CD4-positive, alpha-beta memory T cell (primary cell): ENCODE measurements at regions of chr6 and their contacts with region 1.

Region 1: DNA sequence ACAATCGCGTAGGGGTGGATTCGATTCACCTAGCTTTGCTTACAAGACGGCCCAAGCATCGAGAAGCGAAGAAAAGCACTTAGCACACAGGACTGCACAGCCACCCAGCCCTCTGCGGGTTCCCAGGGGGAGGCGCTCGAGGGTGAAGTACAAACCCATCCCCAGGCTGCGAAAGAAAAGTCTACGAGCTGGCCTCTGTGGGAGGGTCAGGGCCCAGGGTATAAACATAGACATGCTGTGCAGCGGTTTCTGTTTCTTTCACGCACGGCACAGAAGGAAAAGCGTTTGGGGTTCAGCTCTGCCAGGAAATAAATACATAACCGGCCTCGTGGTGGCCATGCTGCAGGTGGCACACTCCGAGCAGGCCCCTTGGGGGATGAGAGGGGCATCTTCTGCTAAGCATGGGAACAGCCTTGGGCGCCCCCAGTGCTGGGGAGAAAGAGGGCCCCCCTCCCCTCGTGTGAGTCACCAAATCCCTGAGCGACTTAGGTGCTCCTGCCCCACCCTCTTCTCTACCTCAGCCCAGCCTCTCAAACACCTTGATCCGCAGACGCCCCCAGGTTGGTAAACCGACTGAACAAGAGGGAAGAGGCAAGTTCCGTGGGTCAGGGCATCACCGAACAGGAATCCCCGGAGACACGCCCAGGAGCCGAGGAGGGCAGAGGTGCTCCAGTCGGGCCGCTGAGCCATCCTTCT is 91.6 kb upstream of the RIPOR2 start:
- DNase-seq: peak; percentile 81 to 88 (median 86)
- H3K4me3 ChIP-seq: peak overlapping the region; percentile 43 to 54
- H3K4me3 Mint-ChIP-seq: peak overlapping the region; percentile 73 to 94 (median 82)
- H3K27ac ChIP-seq: peak overlapping the region; percentile 75
- H3K27ac Mint-ChIP-seq: peak overlapping the region; percentile 89 to 98 (median 93)
- H3K4me1 ChIP-seq: peaks cover 66% of the 10 kb centered on the region
- H3K4me1 Mint-ChIP-seq: peaks cover 53 to 71% (median 63%) of the 10 kb centered on the region in 4 donors
- H3K27me3 ChIP-seq: no peaks in the 10 kb centered on the region
- H3K27me3 Mint-ChIP-seq: no peaks in the 10 kb centered on the region

Region 2: GRCh38 chr6:24566020-24566767 is 461.2 kb before region 1 on chr6:
- CTCF ChIA-PET with region 1: no interaction called
- POLR2A ChIA-PET with region 1: no interaction called
- intact Hi-C with region 1: no loop called
- DNase-seq: no peak
- H3K4me3 ChIP-seq: no peak overlapping the region
- H3K4me3 Mint-ChIP-seq: no peak overlapping the region
- H3K27ac ChIP-seq: no peak overlapping the region
- H3K27ac Mint-ChIP-seq: no peak overlapping the region
- H3K4me1 ChIP-seq: no peaks in the 10 kb centered on the region
- H3K4me1 Mint-ChIP-seq: no peaks in the 10 kb centered on the region
- H3K27me3 ChIP-seq: no peaks in the 10 kb centered on the region
- H3K27me3 Mint-ChIP-seq: no peaks in the 10 kb centered on the region

Region 3: GRCh38 chr6:24720604-24721460 is 306.5 kb before region 1 on chr6:
- CTCF ChIA-PET with region 1: interaction called, 6 read pairs
- POLR2A ChIA-PET with region 1: interaction called, 12 read pairs
- intact Hi-C with region 1: no loop called
- DNase-seq: peak; percentile 100
- H3K4me3 ChIP-seq: peak overlapping the region; percentile 68 to 95
- H3K4me3 Mint-ChIP-seq: peak overlapping the region; percentile 91 to 100 (median 97)
- H3K27ac ChIP-seq: peak overlapping the region; percentile 100
- H3K27ac Mint-ChIP-seq: peak overlapping the region; percentile 90 to 100 (median 99)
- H3K4me1 ChIP-seq: peaks cover 38% of the 10 kb centered on the region
- H3K4me1 Mint-ChIP-seq: peaks cover 33 to 56% (median 40%) of the 10 kb centered on the region in 4 donors
- H3K27me3 ChIP-seq: no peaks in the 10 kb centered on the region
- H3K27me3 Mint-ChIP-seq: no peaks in the 10 kb centered on the region

Region 4: DNA sequence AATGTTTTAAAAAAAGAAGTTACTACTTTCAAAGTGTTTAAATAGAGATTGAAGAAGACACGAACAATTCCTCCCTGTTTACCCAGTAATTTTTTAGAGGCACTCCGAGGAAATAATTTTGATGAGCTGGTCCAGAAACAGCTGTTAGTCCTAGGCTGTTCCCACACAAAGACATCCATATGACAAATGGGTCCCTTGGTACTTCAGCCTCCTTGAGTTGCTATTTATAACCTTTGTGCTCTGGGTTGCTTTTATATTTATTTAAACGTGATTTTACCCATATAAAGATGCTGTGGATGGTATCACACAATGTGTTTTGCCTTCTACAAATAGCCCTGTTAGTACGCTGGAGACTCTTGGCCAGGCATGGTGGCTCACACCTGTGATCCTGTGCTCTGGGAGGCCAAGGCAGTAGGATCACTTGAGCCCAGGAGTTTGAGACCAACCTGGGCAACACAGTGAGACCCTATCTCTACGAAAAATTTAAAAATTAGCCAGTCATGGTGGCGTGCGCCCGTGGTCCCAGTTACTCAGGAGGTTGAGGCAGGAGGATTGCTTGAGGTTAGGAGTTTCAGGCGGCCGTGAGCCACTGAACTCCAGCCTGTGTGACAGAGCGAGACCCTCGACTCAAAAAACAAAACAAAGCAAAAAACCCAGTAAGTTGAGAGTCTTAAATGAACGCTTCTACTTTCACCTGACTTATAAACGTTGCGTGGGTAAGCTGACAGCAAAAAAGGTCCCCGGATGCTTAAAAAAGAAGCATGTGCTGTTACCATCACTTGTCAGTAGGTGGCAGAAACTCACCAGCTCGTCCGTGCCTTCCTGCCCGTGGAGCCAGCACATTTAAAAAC is 171.7 kb before region 1 on chr6:
- CTCF ChIA-PET with region 1: interaction called, 68 read pairs
- POLR2A ChIA-PET with region 1: interaction called, 33 read pairs
- intact Hi-C with region 1: no loop called
- DNase-seq: peak; percentile 76 to 82 (median 77)
- H3K4me3 ChIP-seq: no peak overlapping the region
- H3K4me3 Mint-ChIP-seq: peak overlapping the region in 5 of 8 donors; percentile 1 to 87 (median 26)
- H3K27ac ChIP-seq: peak overlapping the region; percentile 61
- H3K27ac Mint-ChIP-seq: peak overlapping the region; percentile 82 to 92 (median 90)
- H3K4me1 ChIP-seq: peaks cover 53% of the 10 kb centered on the region
- H3K4me1 Mint-ChIP-seq: peaks cover 48 to 58% (median 50%) of the 10 kb centered on the region in 4 donors
- H3K27me3 ChIP-seq: no peaks in the 10 kb centered on the region
- H3K27me3 Mint-ChIP-seq: no peaks in the 10 kb centered on the region

Region 5: DNA sequence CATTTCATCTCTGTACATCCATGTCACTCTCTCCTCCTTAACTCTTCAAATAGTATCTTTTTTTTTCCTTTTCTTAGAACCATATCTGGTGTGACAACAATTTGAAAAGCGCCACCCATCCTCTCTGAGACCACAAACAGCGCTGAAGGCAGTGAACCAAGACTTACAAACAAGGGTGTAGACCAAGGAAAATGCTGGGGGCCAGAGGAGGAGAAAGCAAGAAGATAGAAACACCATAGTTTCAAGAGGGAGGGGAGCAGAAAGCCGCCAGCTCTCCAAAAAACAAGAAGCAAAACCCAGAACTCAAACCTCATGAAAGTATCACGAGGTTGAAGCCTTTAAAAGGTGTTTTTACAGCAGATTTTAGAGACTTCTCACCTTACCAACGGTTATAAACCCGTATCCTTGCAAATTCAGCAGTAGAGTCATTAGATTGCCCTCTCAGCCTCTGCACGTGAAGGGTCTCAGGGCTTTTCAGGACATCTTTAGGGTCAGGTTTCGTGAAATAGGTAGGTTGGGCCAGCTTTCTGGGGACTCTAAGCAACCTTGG is 78.3 kb before region 1 on chr6:
- CTCF ChIA-PET with region 1: interaction called, 3 read pairs
- POLR2A ChIA-PET with region 1: interaction called, 17 read pairs
- intact Hi-C with region 1: no loop called
- DNase-seq: peak; percentile 70 to 86 (median 83)
- H3K4me3 ChIP-seq: peak overlapping the region; percentile 19 to 47
- H3K4me3 Mint-ChIP-seq: peak overlapping the region; percentile 57 to 90 (median 82)
- H3K27ac ChIP-seq: peak overlapping the region; percentile 51
- H3K27ac Mint-ChIP-seq: peak overlapping the region; percentile 84 to 97 (median 95)
- H3K4me1 ChIP-seq: peaks cover 79% of the 10 kb centered on the region
- H3K4me1 Mint-ChIP-seq: peaks cover 56 to 87% (median 72%) of the 10 kb centered on the region in 4 donors
- H3K27me3 ChIP-seq: no peaks in the 10 kb centered on the region
- H3K27me3 Mint-ChIP-seq: no peaks in the 10 kb centered on the region

Region 6: DNA sequence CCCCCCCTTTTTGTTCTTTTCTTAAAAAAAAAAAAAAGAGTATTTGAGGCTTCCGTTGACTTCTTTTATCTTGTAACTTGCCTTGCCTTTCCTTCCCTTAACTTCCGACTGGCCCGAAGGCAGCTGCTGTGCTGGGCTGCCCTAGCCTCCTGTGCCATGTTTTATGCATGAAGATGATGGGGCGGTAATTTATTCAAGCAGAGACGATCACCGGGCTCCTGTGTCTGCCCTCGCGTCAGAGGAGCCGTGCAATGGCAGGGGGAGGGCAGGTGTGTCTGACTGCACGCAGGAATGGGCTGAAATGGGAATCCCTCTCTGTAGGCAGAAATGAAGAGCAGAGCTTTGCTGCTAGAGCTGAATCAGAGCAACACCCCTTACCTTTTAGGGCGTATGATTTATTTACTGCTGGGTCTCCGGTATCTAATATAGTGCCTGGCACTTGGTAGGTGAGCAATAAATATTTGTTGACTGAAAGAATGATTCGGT is 14.7 kb after region 1 on chr6:
- CTCF ChIA-PET with region 1: interaction called, 591 read pairs
- POLR2A ChIA-PET with region 1: interaction called, 370 read pairs
- intact Hi-C with region 1: loop called (anchors 1 kb)
- DNase-seq: peak; percentile 59 to 86 (median 65)
- H3K4me3 ChIP-seq: peak overlapping the region; percentile 67 to 82
- H3K4me3 Mint-ChIP-seq: peak overlapping the region; percentile 95 to 99 (median 96)
- H3K27ac ChIP-seq: peak overlapping the region; percentile 93
- H3K27ac Mint-ChIP-seq: peak overlapping the region; percentile 94 to 100 (median 98)
- H3K4me1 ChIP-seq: peaks cover 63% of the 10 kb centered on the region
- H3K4me1 Mint-ChIP-seq: peaks cover 50 to 85% (median 63%) of the 10 kb centered on the region in 4 donors
- H3K27me3 ChIP-seq: no peaks in the 10 kb centered on the region
- H3K27me3 Mint-ChIP-seq: no peaks in the 10 kb centered on the region

Region 7: GRCh38 chr6:25061289-25061936 is 34.0 kb after region 1 on chr6:
- CTCF ChIA-PET with region 1: interaction called, 591 read pairs
- POLR2A ChIA-PET with region 1: interaction called, 77 read pairs
- intact Hi-C with region 1: loop called (anchors 1 kb)
- DNase-seq: no peak
- H3K4me3 ChIP-seq: no peak overlapping the region
- H3K4me3 Mint-ChIP-seq: no peak overlapping the region
- H3K27ac ChIP-seq: no peak overlapping the region
- H3K27ac Mint-ChIP-seq: peak overlapping the region in 1 of 7 donors; percentile 37
- H3K4me1 ChIP-seq: peaks cover 23% of the 10 kb centered on the region
- H3K4me1 Mint-ChIP-seq: peaks cover 11 to 29% (median 24%) of the 10 kb centered on the region in 4 donors
- H3K27me3 ChIP-seq: no peaks in the 10 kb centered on the region
- H3K27me3 Mint-ChIP-seq: no peaks in the 10 kb centered on the region

Region 8: GRCh38 chr6:25138237-25139125 is 111.1 kb after region 1 on chr6:
- CTCF ChIA-PET with region 1: interaction called, 15 read pairs
- POLR2A ChIA-PET with region 1: interaction called, 8 read pairs
- intact Hi-C with region 1: no loop called
- DNase-seq: peak; percentile 60 to 75 (median 70)
- H3K4me3 ChIP-seq: peak overlapping the region; percentile 57 to 65
- H3K4me3 Mint-ChIP-seq: peak overlapping the region; percentile 87 to 97 (median 90)
- H3K27ac ChIP-seq: peak overlapping the region; percentile 52
- H3K27ac Mint-ChIP-seq: peak overlapping the region; percentile 86 to 96 (median 94)
- H3K4me1 ChIP-seq: peaks cover 42% of the 10 kb centered on the region
- H3K4me1 Mint-ChIP-seq: peaks cover 20 to 44% (median 30%) of the 10 kb centered on the region in 4 donors
- H3K27me3 ChIP-seq: no peaks in the 10 kb centered on the region
- H3K27me3 Mint-ChIP-seq: no peaks in the 10 kb centered on the region